A549 (cell line): ENCODE measurements at regions of chr19 and their contacts with region 1.

Region 1: DNA sequence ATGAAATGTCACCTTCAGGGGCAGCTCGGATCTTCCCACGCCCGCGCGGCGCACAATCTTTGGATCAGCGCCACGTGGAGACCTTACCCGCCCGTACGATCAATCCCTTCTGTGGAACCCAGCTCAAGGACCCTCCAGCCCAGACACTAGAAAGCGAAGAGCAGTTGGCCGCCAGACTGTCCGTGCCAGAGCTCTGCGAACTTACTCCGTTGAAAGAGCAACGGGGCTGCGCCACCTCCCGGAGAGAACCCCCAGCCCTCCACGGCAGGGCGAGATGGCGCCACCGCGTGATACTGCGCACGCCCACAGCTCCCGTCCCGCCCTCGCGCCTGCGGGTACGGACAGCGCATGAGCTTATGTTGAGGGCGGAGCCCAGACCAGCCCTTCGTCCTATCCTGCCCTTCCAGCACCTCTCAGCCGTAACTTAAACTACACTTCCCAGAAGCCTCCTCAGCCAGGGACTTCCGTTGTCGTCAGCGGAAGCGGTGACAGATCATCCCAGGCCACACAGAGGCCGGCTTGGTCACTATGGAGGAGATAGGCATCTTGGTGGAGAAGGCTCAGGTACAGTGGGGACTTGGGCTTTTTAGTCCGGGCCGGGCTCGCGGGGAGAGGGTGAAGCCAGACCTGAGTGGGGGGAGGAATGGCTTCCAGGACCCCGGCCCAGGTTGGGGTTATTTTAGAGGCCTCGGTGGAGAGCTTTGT is at the start of gene PSMC4:
- DNase-seq: peak; percentile 100
- ATAC-seq: peak; percentile 97 to 99
- H3K4me3 ChIP-seq: peak within 1 kb of the TSS; percentile 70
- H3K27ac ChIP-seq: peak within 1 kb of the TSS; percentile 91
- H3K4me1 ChIP-seq: peaks cover 18% of the 10 kb centered on the region
- CTCF ChIP-seq: peak; percentile 99
- EP300 ChIP-seq: no peak
- POLR2A ChIP-seq: peak; percentile 81
- RAD21 ChIP-seq: peak; percentile 99 to 100
- polyA plus RNA-seq, gene PSMC4: 192 and 208 TPM in 2 replicates

Region 2: GRCh38 chr19:39792999-39793546 is 177.8 kb before region 1 on chr19:
- CTCF ChIA-PET with region 1: interaction called, 82 read pairs
- POLR2A ChIA-PET with region 1: interaction called, 7 read pairs
- DNase-seq: peak; percentile 88 to 99
- ATAC-seq: peak; percentile 97 to 99
- H3K4me3 ChIP-seq: peak overlapping the region; percentile 40
- H3K27ac ChIP-seq: 0 out of 6 replicates have a peak overlapping the region, but pooled peaks of 1 of the 2 experiments have one; percentile 37
- H3K4me1 ChIP-seq: no peaks in the 10 kb centered on the region
- CTCF ChIP-seq: peak; percentile 100
- EP300 ChIP-seq: no peak
- POLR2A ChIP-seq: no peak
- RAD21 ChIP-seq: peak; percentile 97 to 99

Region 3: DNA sequence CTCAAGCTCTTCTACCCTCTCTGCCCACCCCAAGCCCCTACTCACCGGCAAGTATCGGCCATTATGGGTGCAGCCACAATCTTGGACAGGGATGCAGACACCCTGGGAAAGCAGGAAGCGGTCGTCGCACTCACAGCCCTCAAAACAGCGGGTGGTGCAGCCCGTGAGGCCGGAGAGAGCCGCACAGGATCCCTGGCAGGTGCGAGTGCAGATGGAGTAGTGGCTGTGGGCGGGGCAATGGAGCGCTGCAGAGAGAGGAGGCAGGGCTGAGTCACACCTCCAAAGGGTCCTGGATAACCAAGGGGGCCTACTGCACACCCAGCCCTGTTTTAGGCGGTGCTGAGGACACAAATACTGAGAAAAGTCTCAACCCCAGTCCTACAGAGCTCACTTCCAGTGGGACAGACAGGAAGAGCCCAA is 100.6 kb before region 1 on chr19:
- CTCF ChIA-PET with region 1: interaction called, 16 read pairs
- POLR2A ChIA-PET with region 1: interaction called, 3 read pairs
- DNase-seq: no peak
- ATAC-seq: no peak
- H3K4me3 ChIP-seq: no peak overlapping the region
- H3K27ac ChIP-seq: no peak overlapping the region
- H3K4me1 ChIP-seq: no peaks in the 10 kb centered on the region
- CTCF ChIP-seq: no peak
- EP300 ChIP-seq: no peak
- POLR2A ChIP-seq: no peak
- RAD21 ChIP-seq: no peak

Region 4: GRCh38 chr19:39915101-39915847 is 55.6 kb before region 1 on chr19:
- CTCF ChIA-PET with region 1: interaction called, 26 read pairs
- POLR2A ChIA-PET with region 1: interaction called, 7 read pairs
- DNase-seq: no peak
- ATAC-seq: no peak
- H3K4me3 ChIP-seq: no peak overlapping the region
- H3K27ac ChIP-seq: peak overlapping the region in 1 of 2 experiments; percentile 9; a peak in 1 of 6 replicates
- H3K4me1 ChIP-seq: peaks cover 11% of the 10 kb centered on the region; the same call in 2 of the 3 replicates
- CTCF ChIP-seq: no peak
- EP300 ChIP-seq: no peak
- POLR2A ChIP-seq: no peak
- RAD21 ChIP-seq: no peak

Region 5: GRCh38 chr19:39951686-39952085 is 19.1 kb before region 1 on chr19:
- CTCF ChIA-PET with region 1: interaction called, 31 read pairs
- POLR2A ChIA-PET with region 1: interaction called, 6 read pairs
- DNase-seq: peak; percentile 70 to 89
- ATAC-seq: peak; percentile 90 to 95
- H3K4me3 ChIP-seq: no peak overlapping the region
- H3K27ac ChIP-seq: peak overlapping the region; percentile 26 to 60; a peak in 5 of 6 replicates
- H3K4me1 ChIP-seq: peaks cover 16% of the 10 kb centered on the region
- CTCF ChIP-seq: no peak
- EP300 ChIP-seq: no peak
- POLR2A ChIP-seq: no peak
- RAD21 ChIP-seq: no peak

Region 6: DNA sequence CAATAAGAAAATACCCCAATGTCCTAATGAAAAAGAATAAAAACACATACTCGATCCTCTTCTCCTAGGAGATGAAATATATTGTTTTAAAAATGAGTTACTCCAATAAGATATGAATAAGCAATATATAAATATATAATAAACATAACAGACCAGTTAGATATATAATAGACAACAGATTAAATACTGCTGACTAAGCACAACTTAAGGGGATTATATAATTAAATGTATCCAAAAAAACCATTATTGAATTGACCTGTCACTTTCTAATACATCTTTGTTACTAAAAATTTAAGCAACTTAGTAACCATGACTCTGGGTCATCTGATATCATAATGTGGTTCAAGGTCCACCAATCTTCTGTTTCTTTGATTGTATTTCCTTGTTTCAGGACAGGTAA is 99.2 kb after region 1 on chr19:
- CTCF ChIA-PET with region 1: interaction called, 10 read pairs
- POLR2A ChIA-PET with region 1: no interaction called
- DNase-seq: no peak
- ATAC-seq: no peak
- H3K4me3 ChIP-seq: no peak overlapping the region
- H3K27ac ChIP-seq: no peak overlapping the region
- H3K4me1 ChIP-seq: no peaks in the 10 kb centered on the region
- CTCF ChIP-seq: no peak
- EP300 ChIP-seq: no peak
- POLR2A ChIP-seq: no peak
- RAD21 ChIP-seq: no peak

Region 7: GRCh38 chr19:40200341-40201099 is 229.7 kb after region 1 on chr19:
- CTCF ChIA-PET with region 1: no interaction called
- POLR2A ChIA-PET with region 1: no interaction called
- DNase-seq: no peak
- ATAC-seq: peak in 1 of 2 experiments; percentile 34; a peak in 2 of 6 replicates
- H3K4me3 ChIP-seq: no peak overlapping the region
- H3K27ac ChIP-seq: no peak overlapping the region
- H3K4me1 ChIP-seq: no peaks in the 10 kb centered on the region
- CTCF ChIP-seq: no peak
- EP300 ChIP-seq: no peak
- POLR2A ChIP-seq: no peak
- RAD21 ChIP-seq: no peak

Region 8: GRCh38 chr19:40294560-40294959 is 323.7 kb after region 1 on chr19:
- CTCF ChIA-PET with region 1: no interaction called
- POLR2A ChIA-PET with region 1: no interaction called
- DNase-seq: no peak
- ATAC-seq: peak in 1 of 2 experiments; percentile 13; a peak in 1 of 6 replicates
- H3K4me3 ChIP-seq: no peak overlapping the region
- H3K27ac ChIP-seq: no peak overlapping the region
- H3K4me1 ChIP-seq: no peaks in the 10 kb centered on the region
- CTCF ChIP-seq: no peak
- EP300 ChIP-seq: no peak
- POLR2A ChIP-seq: no peak
- RAD21 ChIP-seq: no peak